Activated T-helper 2 cell treated with anti-CD3 and anti-CD28 coated beads, Interferon-gamma antibody, Interleukin-2, Interleukin-4, amounts not matched to agents 10 μg/mL and 5 μg/mL and 100 μg/mL, durations not matched to agents 14 hours and 24 hours and 36 hours (primary cell): ENCODE measurements at regions of chr13 and their contacts with region 1.

Region 1: GRCh38 chr13:41905600-41906254 is 55.2 kb downstream of the VWA8 start:
- DNase-seq: no peak
- H3K4me3 Mint-ChIP-seq: no peak overlapping the region
- H3K27ac Mint-ChIP-seq: no peak overlapping the region
- H3K4me1 Mint-ChIP-seq: peaks cover 14% of the 10 kb centered on the region
- H3K27me3 Mint-ChIP-seq: no peaks in the 10 kb centered on the region

Region 2: GRCh38 chr13:41767801-41768200 is 137.9 kb before region 1 on chr13:
- intact Hi-C with region 1: loop called (anchors 10 kb)
- DNase-seq: no peak
- H3K4me3 Mint-ChIP-seq: no peak overlapping the region
- H3K27ac Mint-ChIP-seq: no peak overlapping the region
- H3K4me1 Mint-ChIP-seq: peaks cover 14% of the 10 kb centered on the region
- H3K27me3 Mint-ChIP-seq: no peaks in the 10 kb centered on the region

Region 3: DNA sequence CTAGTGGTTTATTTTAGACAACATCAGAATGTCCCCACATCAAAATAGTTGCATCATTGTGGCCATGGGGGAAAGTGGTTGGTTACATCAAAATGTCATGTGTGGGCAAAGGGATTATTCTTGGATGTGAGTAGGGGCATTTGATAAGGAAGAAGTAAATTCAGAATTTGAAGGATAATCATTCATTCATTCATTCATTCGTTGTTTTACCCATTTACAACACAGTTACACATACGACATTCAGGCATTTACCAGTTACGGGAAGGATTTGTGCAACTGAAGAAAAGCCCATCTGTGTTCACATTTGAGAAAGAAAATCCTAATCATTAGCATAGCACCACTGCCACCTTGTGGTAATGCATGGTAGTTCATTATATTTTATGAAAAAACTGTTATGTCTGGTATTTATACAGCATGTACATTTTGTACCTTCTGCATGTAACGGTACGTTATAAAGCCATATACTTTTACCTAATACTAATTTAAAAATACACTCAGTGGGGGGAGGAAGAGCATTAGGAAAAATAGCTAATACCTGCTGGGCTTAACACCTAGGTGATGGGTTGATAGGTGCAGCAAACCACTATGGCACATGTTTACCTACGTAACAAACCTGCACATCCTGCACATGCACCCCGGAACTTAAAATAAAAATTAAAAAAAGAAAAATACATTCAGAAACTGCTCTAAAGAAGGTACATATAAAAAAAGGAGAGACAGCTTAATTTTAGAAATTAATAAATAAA is 204.9 kb after region 1 on chr13:
- intact Hi-C with region 1: loop called (anchors 2 kb)
- DNase-seq: no peak
- H3K4me3 Mint-ChIP-seq: no peak overlapping the region
- H3K27ac Mint-ChIP-seq: no peak overlapping the region
- H3K4me1 Mint-ChIP-seq: peaks cover 15% of the 10 kb centered on the region
- H3K27me3 Mint-ChIP-seq: no peaks in the 10 kb centered on the region

Region 4: DNA sequence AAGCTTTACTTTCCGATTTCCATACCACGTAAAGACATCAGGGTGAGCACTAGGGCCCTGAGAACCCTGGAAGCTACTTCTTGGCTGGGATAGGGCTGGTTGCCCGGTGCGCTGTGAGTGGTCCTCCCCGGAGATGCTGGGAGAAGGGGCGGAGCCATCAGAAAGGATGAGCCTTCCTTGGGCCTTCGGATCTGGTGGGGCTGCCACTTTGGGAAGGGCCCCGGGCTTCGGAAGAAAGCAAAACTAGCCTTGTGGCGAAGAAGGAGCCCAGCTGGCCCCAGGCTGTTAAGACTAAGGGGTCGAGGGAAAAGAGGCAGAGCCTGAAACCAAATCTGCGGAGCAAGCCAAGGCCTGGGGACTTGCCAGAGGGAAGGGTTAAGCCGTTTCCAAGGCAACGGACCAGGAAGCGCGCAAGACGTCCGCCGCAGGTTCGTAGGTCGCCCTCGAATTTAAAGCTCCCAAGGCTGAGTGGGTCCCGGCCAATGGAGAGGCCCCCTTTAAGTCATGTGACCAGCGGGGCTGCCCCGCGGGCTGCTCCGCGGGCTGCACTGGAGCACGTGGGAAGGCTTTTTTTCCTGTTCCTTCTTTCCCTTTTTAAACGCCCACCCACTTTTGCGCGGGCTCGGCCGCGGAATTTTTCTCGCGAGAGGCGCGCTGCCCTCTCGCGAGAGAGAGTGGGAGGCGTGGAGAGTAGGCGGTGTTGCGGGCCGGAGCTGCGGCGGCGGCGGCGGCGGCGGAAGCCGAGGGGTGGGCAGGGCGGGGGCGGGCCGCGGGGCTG is 365.8 kb after region 1 on chr13:
- intact Hi-C with region 1: no loop called
- DNase-seq: peak; percentile 95
- H3K4me3 Mint-ChIP-seq: peak overlapping the region; percentile 78
- H3K27ac Mint-ChIP-seq: peak overlapping the region; percentile 91
- H3K4me1 Mint-ChIP-seq: peaks cover 44% of the 10 kb centered on the region
- H3K27me3 Mint-ChIP-seq: no peaks in the 10 kb centered on the region

Region 5: DNA sequence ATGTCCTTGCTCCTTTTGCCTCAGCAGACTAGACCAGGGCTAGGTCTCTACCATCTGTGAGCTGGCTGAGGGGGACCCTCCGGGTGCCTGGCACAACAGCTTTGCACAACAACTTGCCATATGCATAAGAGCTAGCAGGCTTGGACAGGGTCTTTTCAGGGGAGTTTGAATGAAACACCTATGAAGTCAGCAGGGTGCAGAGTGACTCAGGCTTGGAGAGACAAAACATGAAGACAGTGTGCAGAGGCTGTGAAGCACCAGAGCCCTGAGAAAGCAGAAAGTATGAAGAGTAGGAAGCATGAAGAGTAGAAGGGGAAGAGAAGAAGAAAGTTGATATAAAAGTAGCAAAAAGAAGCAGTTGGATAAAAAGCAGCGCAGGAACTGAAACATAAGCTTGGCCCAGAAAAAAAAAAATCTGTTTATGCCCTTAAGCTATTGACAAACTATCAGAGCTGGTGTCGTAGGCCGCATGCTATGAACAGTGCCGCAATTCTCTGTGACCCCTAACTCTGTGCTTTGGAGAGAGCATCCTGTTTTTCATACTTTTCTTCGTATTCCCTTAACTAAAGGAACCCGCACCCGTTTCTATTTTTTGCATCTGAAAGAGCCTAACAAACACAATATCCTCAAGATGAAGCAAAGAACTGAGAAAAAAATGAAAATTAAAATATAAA is 822.9 kb after region 1 on chr13:
- intact Hi-C with region 1: no loop called
- DNase-seq: no peak
- H3K4me3 Mint-ChIP-seq: no peak overlapping the region
- H3K27ac Mint-ChIP-seq: no peak overlapping the region
- H3K4me1 Mint-ChIP-seq: no peaks in the 10 kb centered on the region
- H3K27me3 Mint-ChIP-seq: peaks cover 31% of the 10 kb centered on the region